HEK293 (cell line): ENCODE measurements at regions of chrX and their contacts with region 1.

Region 1: DNA sequence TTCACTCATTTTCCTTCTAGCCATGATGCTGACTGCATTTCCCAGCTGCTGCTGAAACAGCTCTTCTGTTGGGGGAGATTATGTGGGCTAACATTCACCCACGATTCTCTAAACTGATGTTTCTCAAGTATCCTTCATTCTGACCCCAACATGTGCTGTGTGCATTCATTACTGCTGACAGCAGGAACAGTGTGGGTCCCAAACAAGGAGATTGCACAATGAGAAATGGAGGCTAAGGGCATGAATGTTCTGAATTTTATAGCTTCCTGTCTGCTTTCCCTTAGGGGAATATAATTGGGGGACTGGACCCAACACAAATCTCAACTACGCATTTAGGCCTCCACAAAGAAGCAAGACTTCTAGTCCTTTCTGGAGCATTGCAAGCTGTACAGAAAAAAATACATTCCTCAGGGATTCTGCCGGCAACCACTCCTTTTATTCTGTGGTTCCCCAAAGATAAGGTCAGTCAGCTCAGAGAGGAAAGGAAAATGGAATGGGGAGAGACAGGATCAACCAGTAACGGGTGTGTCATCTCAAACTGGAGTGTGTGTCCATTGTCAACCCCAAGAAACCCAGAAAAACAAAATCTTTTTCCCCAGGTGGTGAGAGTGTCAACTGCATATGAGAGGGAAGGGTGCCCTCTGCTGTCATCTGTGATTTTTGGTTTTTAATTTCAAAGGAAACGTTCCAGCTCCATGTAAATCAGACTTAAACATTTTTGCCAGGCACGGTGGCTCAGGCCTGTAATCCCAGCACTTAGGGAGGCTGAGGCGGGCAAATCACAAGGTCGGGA is 81.5 kb upstream of the EGFL6 start:
- H3K4me3 ChIP-seq: no peak overlapping the region
- H3K27ac ChIP-seq: peak overlapping the region; percentile 92
- H3K4me1 ChIP-seq: peaks cover 12% of the 10 kb centered on the region
- CTCF ChIP-seq: peak; percentile 57

Region 2: DNA sequence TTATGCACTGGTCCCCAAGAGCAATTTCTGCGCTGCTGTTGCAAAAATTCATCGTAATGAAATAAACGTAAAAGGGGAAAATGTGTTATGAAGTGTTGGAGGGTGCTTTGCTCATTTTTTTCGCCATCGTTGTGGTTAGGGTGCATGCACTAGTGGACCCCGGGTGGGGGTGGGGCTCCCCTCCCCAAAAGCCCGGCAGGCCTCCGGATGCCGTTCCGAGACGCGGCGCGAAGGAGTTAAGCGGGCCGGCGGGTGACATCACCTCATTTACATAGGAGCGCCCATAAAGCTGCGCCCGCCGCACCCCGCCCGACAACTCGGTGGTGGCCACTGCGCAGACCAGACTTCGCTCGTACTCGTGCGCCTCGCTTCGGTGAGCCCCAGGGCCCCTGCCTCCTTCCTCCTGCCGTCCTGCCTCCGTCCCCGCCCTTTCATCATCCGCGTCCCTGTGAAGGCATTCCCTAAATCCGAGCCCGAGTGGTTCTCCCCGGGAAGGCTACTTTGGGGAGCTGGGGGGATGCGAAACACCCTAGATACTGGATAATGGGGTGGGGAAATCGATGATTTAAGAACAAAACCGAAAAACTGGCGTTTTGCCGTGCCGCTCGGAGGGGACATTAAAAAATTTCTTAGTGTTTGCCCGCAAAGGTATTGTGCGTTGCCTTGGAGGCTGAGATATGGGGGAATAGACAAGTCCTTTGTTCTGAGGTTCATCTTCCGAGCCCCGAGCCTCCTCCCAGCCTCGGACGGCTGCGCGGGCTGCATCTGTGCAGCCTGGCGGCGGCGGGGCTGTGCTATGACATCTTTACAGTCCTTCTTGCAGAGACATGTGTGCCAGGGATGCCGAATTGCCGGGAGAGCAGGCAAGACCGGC is 512.9 kb before region 1 on chrX and contains the start of gene TMSB4X:
- CTCF ChIA-PET with region 1: interaction called, 42 read pairs
- POLR2A ChIA-PET with region 1: interaction called, 3 read pairs
- H3K4me3 ChIP-seq: peak within 1 kb of the TSS; percentile 62
- H3K27ac ChIP-seq: peak within 1 kb of the TSS; percentile 73
- H3K4me1 ChIP-seq: no peaks in the 10 kb centered on the region
- CTCF ChIP-seq: no peak

Region 3: DNA sequence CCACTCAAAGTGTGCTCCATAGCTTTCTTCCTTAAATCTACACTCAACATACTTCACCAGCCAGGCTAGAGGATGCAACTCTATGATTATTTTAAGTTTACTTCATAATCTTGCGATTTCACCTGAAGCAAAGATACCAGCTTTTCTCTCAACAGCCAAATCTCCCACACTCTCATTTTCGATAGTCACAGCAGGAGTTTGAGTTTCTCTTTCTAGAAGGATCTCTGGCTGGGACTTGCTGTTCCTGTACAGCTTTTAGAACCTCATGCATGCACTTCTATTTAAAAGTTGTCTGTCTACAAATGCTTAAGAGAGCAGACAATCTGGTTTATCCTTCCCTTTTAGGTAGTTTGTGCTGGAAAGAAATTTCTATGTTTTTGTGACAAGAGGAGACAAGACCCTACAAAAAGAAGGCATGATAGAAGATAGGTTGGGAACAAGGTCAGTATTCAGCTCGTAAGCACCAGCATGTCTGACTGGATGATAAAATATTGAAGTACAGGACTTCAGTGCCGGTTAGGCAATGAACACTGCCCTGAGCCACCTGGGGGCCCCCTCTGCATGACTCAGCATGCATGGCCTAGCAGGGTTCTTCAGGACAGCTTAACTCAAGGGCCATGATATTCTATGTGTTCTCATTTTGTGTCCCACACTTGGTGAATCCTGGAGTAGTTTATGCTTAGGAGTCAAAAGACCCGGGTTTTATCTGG is 233.7 kb before region 1 on chrX:
- CTCF ChIA-PET with region 1: interaction called, 20 read pairs
- POLR2A ChIA-PET with region 1: no interaction called
- H3K4me3 ChIP-seq: no peak overlapping the region
- H3K27ac ChIP-seq: no peak overlapping the region; the same call in 1 of the 2 replicates
- H3K4me1 ChIP-seq: no peaks in the 10 kb centered on the region
- CTCF ChIP-seq: no peak

Region 4: GRCh38 chrX:13401724-13402123 is 86.2 kb before region 1 on chrX:
- CTCF ChIA-PET with region 1: interaction called, 12 read pairs
- POLR2A ChIA-PET with region 1: no interaction called
- H3K4me3 ChIP-seq: no peak overlapping the region
- H3K27ac ChIP-seq: no peak overlapping the region
- H3K4me1 ChIP-seq: no peaks in the 10 kb centered on the region
- CTCF ChIP-seq: no peak

Region 5: GRCh38 chrX:13467243-13467642 is 20.7 kb before region 1 on chrX:
- CTCF ChIA-PET with region 1: interaction called, 13 read pairs
- POLR2A ChIA-PET with region 1: no interaction called
- H3K4me3 ChIP-seq: no peak overlapping the region
- H3K27ac ChIP-seq: no peak overlapping the region
- H3K4me1 ChIP-seq: no peaks in the 10 kb centered on the region
- CTCF ChIP-seq: no peak

Region 6: GRCh38 chrX:13742397-13743176 is 254.7 kb after region 1 on chrX:
- CTCF ChIA-PET with region 1: no interaction called
- POLR2A ChIA-PET with region 1: no interaction called
- H3K4me3 ChIP-seq: no peak overlapping the region
- H3K27ac ChIP-seq: no peak overlapping the region
- H3K4me1 ChIP-seq: no peaks in the 10 kb centered on the region
- CTCF ChIP-seq: no peak